Activated T-helper 1 cell treated with anti-CD3 and anti-CD28 coated beads, Interleukin-12 subunit alpha, Interleukin-12 subunit beta, Interleukin-2, Interleukin-4 antibody, amounts not matched to agents 30 ng/mL and 10 ng/mL and 1 ng/mL, durations not matched to agents 14 hours and 24 hours and 36 hours (primary cell): ENCODE measurements at regions of chr1 and their contacts with region 1.

Region 1: DNA sequence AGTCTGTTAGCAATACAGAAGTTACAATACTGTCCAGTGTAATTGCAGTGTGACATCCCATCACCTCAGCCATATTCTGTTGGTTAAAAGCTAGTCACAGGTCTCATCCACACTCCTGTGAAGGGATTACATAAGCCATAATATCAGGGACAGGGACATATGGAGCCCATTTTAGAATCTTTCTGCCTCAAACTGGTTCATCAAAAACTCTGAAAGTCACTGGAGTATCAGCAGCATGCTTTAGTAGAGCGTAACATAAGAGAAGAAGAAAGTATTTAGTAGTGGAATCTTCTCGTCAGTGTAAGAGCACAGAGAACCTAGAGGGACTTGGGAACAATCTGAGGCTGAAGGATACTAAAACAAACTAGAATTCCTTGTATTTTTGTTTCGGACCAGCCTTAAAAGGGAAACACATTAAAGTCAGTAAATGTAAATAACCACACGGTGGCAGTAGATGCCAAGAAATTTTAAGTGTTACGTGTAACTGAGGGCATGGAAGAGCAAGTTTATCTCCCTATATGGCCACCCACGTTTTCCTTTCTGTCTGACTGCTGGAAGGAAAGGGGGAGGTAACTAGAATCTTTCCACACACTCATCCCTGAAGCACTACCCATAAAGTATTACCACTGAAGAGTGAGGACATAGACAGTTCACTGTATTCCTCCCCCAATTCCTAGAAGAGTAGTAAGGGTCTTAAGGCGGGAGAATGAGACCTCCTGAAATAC is 41.6 kb upstream of the AGL start:
- DNase-seq: peak; percentile 29
- H3K4me3 Mint-ChIP-seq: no peak overlapping the region
- H3K27ac Mint-ChIP-seq: peak overlapping the region; percentile 15
- H3K4me1 Mint-ChIP-seq: peaks cover 17% of the 10 kb centered on the region
- H3K27me3 Mint-ChIP-seq: peaks cover 13% of the 10 kb centered on the region

Region 2: GRCh38 chr1:99849744-99850458 is 41.3 kb after region 1 on chr1 and contains the start of gene AGL:
- intact Hi-C with region 1: loop called (anchors 1 kb)
- DNase-seq: peak; percentile 80
- H3K4me3 Mint-ChIP-seq: peak within 1 kb of the TSS; percentile 92
- H3K27ac Mint-ChIP-seq: peak within 1 kb of the TSS; percentile 86
- H3K4me1 Mint-ChIP-seq: peaks cover 17% of the 10 kb centered on the region
- H3K27me3 Mint-ChIP-seq: peaks cover 6% of the 10 kb centered on the region
- total RNA-seq, gene AGL: 10.7 and 10.8 TPM in 2 replicates

Region 3: GRCh38 chr1:100132566-100133477 is 324.3 kb after region 1 on chr1 and contains the starts of genes SASS6 and TRMT13:
- intact Hi-C with region 1: loop called (anchors 1 kb)
- DNase-seq: peak; percentile 93
- H3K4me3 Mint-ChIP-seq: peak within 1 kb of the TSS; percentile 99
- H3K27ac Mint-ChIP-seq: peak within 1 kb of the TSS; percentile 98
- H3K4me1 Mint-ChIP-seq: peaks cover 56% of the 10 kb centered on the region
- H3K27me3 Mint-ChIP-seq: no peaks in the 10 kb centered on the region
- total RNA-seq, gene SASS6: 16.4 and 16.7 TPM in 2 replicates
- total RNA-seq, gene TRMT13: 21.8 and 25.0 TPM in 2 replicates

Region 4: DNA sequence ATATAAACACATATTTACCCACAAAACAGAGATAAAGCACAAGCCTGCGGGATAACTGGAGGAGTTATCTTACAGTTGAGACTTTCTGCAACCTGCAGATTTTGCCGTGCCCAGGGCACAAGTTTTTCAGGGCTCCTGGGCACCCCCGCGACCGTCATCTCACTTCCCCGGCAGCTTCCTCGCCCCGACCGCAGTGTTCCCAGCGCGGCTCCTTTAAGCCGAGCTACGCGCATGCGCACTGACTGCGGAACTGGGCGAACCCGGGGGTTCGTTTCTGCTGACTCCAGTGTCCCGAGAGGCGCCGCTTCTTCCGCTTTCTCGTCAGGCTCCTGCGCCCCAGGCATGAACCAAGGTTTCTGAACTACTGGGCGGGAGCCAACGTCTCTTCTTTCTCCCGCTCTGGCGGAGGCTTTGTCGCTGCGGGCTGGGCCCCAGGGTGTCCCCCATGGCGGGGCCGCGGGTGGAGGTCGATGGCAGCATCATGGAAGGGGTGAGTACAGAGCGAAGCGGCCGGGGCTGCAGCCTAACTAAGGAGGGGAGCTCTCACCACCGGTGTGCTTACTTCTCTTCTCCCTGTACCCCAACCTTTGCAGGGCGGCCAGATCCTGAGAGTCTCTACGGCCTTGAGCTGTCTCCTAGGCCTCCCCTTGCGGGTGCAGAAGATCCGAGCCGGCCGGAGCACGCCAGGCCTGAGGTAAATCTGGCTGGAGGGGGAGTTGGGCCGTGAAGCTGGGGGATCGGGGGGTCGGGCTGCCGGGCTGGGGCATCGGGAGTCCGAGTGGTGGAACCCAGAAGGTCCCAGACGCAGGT is 457.6 kb after region 1 on chr1 and contains the start of gene RTCA:
- intact Hi-C with region 1: loop called (anchors 2 kb)
- DNase-seq: peak; percentile 94
- H3K4me3 Mint-ChIP-seq: peak within 1 kb of the TSS; percentile 100
- H3K27ac Mint-ChIP-seq: peak within 1 kb of the TSS; percentile 100
- H3K4me1 Mint-ChIP-seq: peaks cover 50% of the 10 kb centered on the region
- H3K27me3 Mint-ChIP-seq: peaks cover 4% of the 10 kb centered on the region
- total RNA-seq, gene RTCA: 48.1 and 52.0 TPM in 2 replicates

Region 5: GRCh38 chr1:100866041-100866900 is 1057.7 kb after region 1 on chr1:
- intact Hi-C with region 1: loop called (anchors 1 kb)
- DNase-seq: no peak
- H3K4me3 Mint-ChIP-seq: no peak overlapping the region
- H3K27ac Mint-ChIP-seq: no peak overlapping the region
- H3K4me1 Mint-ChIP-seq: no peaks in the 10 kb centered on the region
- H3K27me3 Mint-ChIP-seq: no peaks in the 10 kb centered on the region